ENCODE measurements at regions of chr11 and their contacts with region 1.

Region 1: DNA sequence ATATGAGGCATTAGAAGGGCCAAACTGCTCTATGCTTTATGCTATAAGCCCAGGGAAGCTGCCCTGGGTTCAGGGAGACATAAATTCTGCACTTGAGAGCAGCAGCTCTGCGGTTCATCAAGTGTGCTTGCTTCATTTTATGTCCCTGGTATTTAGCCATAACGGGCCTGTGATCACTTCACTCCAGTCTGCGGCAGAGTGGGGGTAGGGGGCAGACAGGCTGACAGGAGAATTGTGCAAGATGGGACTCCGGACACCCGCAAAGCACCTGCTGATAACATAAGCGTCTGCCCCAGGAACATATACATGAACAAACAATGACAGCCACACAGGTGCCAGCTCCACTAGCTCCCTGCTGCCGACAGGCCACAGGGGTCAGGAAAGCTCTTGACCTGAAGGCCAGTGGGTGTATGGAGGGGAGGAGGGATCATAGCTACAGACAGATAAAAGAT is 56.1 kb downstream of the SMCO4 start:
- DNase-seq: peak; percentile 68
- H3K4me3 ChIP-seq: no peak overlapping the region
- H3K27ac ChIP-seq: peak overlapping the region in 2 of 4 donors; percentile 9 to 48
- H3K4me1 ChIP-seq: peaks cover 0 to 39% (median 32%) of the 10 kb centered on the region in 4 donors
- H3K27me3 ChIP-seq: no peaks in the 10 kb centered on the region
- CTCF ChIP-seq: no peak
- EP300 ChIP-seq: peak in 2 of 4 donors; percentile 11 to 25
- POLR2A ChIP-seq: no peak

Region 2: DNA sequence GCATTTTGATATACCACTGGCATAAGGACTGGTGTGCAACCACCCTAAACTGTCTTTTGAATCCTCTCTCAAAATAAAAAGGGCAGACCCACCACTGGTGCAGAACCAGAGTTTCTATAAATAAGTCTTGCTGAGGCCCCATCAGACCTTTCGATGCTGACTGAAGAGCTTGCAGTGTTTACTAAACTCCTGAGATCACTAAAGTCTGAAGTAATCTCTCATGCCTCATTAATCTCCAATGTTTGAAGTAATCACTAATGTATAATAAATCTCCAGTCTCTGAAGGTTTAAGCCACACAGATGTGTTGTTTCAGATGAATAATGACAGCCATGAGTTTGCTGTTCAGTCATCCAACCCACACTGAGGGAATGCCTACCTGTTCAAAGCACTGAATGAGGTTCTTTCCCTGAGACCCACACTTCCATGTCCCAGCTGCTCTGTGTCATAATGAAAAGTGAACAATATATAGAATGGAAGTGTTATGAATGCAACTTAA is 207.2 kb before region 1 on chr11:
- intact Hi-C with region 1: no loop called
- DNase-seq: no peak
- H3K4me3 ChIP-seq: no peak overlapping the region
- H3K27ac ChIP-seq: no peak overlapping the region
- H3K4me1 ChIP-seq: no peaks in the 10 kb centered on the region
- H3K27me3 ChIP-seq: no peaks in the 10 kb centered on the region
- CTCF ChIP-seq: no peak
- EP300 ChIP-seq: no peak
- POLR2A ChIP-seq: no peak

Region 3: GRCh38 chr11:93543292-93543977 is 56.4 kb after region 1 on chr11 and contains the start of gene SMCO4:
- intact Hi-C with region 1: loop called (anchors 5 kb)
- DNase-seq: peak; percentile 88
- H3K4me3 ChIP-seq: peak within 1 kb of the TSS; percentile 48 to 89 (median 72)
- H3K27ac ChIP-seq: peak within 1 kb of the TSS; percentile 75 to 89 (median 78)
- H3K4me1 ChIP-seq: peaks cover 2 to 14% (median 9%) of the 10 kb centered on the region in 4 donors
- H3K27me3 ChIP-seq: no peaks in the 10 kb centered on the region
- CTCF ChIP-seq: peak; percentile 25 to 63 (median 44)
- EP300 ChIP-seq: no peak
- POLR2A ChIP-seq: no peak
- total RNA-seq, gene SMCO4: 2.4 to 9.6 (median 6.1) TPM